Ascending aorta (tissue), 2 donors: ENCODE measurements at regions of chr7 and their contacts with region 1.

Region 1: GRCh38 chr7:99143853-99144672 is at the start of gene SMURF1:
- DNase-seq: peak in 1 of 2 donors; percentile 79
- H3K4me3 ChIP-seq: peak within 1 kb of the TSS; percentile 97 to 100
- H3K27ac ChIP-seq: peak within 1 kb of the TSS; percentile 99 to 100
- H3K4me1 ChIP-seq: peaks cover 3 to 11% of the 10 kb centered on the region in 2 donors
- H3K27me3 ChIP-seq: no peaks in the 10 kb centered on the region
- CTCF ChIP-seq: peak in 1 of 3 experiments; percentile 35
- total RNA-seq, gene SMURF1: 26.5 TPM

Region 2: DNA sequence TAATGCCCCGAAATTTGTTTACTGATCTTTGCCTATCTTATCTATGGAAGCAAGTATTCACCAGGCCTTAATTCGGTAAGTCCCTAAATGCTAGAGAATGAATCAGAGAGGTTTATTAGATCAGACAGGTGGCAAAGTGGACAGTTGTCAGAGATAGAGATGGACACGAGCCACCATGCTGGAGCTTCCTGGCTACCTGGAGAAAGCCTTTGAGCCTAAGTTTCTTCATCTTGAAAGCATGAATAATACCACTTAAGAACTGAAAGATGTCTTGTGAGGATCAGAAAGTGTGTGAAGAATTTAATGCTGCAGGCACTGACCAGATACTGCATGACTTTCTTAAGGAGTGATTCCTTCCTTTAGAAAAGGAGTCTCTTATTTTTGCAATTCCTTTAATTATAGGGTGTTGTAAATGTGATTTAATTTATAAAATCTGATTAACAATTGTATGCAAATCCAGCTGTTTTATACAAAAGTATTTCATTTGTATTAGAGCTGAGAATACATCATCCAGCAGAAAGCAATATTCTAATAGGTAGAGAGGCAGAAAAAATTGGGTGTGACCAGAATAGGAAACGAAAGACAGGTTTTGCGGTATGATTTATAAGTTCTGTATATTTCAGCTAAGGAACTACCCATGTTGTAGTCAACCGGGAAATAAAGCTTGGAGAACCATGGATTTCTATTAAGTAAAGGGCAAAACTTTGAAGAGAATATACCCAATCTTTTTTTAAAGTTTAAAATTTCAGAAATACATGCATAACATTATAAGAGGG is 82.9 kb before region 1 on chr7:
- intact Hi-C with region 1: loop called (anchors 2 kb)
- DNase-seq: no peak
- H3K4me3 ChIP-seq: no peak overlapping the region
- H3K27ac ChIP-seq: no peak overlapping the region
- H3K4me1 ChIP-seq: no peaks in the 10 kb centered on the region
- H3K27me3 ChIP-seq: no peaks in the 10 kb centered on the region
- CTCF ChIP-seq: no peak

Region 3: GRCh38 chr7:99109108-99110051 is 34.7 kb before region 1 on chr7:
- intact Hi-C with region 1: loop called (anchors 2 kb)
- DNase-seq: no peak
- H3K4me3 ChIP-seq: peak overlapping the region; percentile 3 to 14
- H3K27ac ChIP-seq: peak overlapping the region; percentile 79 to 84
- H3K4me1 ChIP-seq: peaks cover 9 to 62% of the 10 kb centered on the region in 2 donors
- H3K27me3 ChIP-seq: no peaks in the 10 kb centered on the region
- CTCF ChIP-seq: no peak

Region 4: GRCh38 chr7:99219985-99220384 is 75.9 kb after region 1 on chr7:
- intact Hi-C with region 1: loop called (anchors 2 kb)
- DNase-seq: no peak
- H3K4me3 ChIP-seq: no peak overlapping the region
- H3K27ac ChIP-seq: peak overlapping the region; percentile 45 to 55
- H3K4me1 ChIP-seq: peaks cover 0 to 1% of the 10 kb centered on the region in 2 donors
- H3K27me3 ChIP-seq: no peaks in the 10 kb centered on the region
- CTCF ChIP-seq: no peak

Region 5: GRCh38 chr7:99331002-99331401 is 186.9 kb after region 1 on chr7:
- intact Hi-C with region 1: no loop called
- DNase-seq: no peak
- H3K4me3 ChIP-seq: no peak overlapping the region
- H3K27ac ChIP-seq: no peak overlapping the region
- H3K4me1 ChIP-seq: peaks cover 8 to 34% of the 10 kb centered on the region in 2 donors
- H3K27me3 ChIP-seq: no peaks in the 10 kb centered on the region
- CTCF ChIP-seq: no peak